SK-N-SH (cell line): ENCODE measurements at regions of chr9 and their contacts with region 1.

Region 1: GRCh38 chr9:2234371-2234893 is 219.3 kb downstream of the SMARCA2 start:
- DNase-seq: peak; percentile 64
- H3K4me3 ChIP-seq: no peak overlapping the region
- H3K27ac ChIP-seq: peak overlapping the region in 1 of 2 experiments; percentile 82; a peak in 2 of 4 replicates
- H3K4me1 ChIP-seq: peaks cover 0 to 28% of the 10 kb centered on the region in 2 experiments; a peak in 2 of 4 replicates
- H3K27me3 ChIP-seq: no peaks in the 10 kb centered on the region
- CTCF ChIP-seq: no peak
- EP300 ChIP-seq: peak in 1 of 2 experiments; percentile 85; a peak in 2 of 4 replicates
- RAD21 ChIP-seq: peak; percentile 9; the same call in 1 of the 2 replicates

Region 2: GRCh38 chr9:2153630-2154217 is 80.7 kb before region 1 on chr9:
- CTCF ChIA-PET with region 1: no interaction called
- POLR2A ChIA-PET with region 1: no interaction called
- DNase-seq: no peak
- H3K4me3 ChIP-seq: no peak overlapping the region
- H3K27ac ChIP-seq: no peak overlapping the region
- H3K4me1 ChIP-seq: peaks cover 6 to 13% of the 10 kb centered on the region in 2 experiments; a peak in 3 of 4 replicates
- H3K27me3 ChIP-seq: no peaks in the 10 kb centered on the region
- CTCF ChIP-seq: no peak
- EP300 ChIP-seq: no peak
- RAD21 ChIP-seq: no peak

Region 3: GRCh38 chr9:2181792-2182191 is 52.6 kb before region 1 on chr9:
- CTCF ChIA-PET with region 1: interaction called, 11 read pairs
- POLR2A ChIA-PET with region 1: no interaction called
- DNase-seq: peak; percentile 47
- H3K4me3 ChIP-seq: no peak overlapping the region; a peak in 1 of 4 replicates
- H3K27ac ChIP-seq: no peak overlapping the region
- H3K4me1 ChIP-seq: no peaks in the 10 kb centered on the region; a peak in 2 of 4 replicates
- H3K27me3 ChIP-seq: no peaks in the 10 kb centered on the region
- CTCF ChIP-seq: peak; percentile 61
- EP300 ChIP-seq: no peak
- RAD21 ChIP-seq: peak; percentile 60

Region 4: DNA sequence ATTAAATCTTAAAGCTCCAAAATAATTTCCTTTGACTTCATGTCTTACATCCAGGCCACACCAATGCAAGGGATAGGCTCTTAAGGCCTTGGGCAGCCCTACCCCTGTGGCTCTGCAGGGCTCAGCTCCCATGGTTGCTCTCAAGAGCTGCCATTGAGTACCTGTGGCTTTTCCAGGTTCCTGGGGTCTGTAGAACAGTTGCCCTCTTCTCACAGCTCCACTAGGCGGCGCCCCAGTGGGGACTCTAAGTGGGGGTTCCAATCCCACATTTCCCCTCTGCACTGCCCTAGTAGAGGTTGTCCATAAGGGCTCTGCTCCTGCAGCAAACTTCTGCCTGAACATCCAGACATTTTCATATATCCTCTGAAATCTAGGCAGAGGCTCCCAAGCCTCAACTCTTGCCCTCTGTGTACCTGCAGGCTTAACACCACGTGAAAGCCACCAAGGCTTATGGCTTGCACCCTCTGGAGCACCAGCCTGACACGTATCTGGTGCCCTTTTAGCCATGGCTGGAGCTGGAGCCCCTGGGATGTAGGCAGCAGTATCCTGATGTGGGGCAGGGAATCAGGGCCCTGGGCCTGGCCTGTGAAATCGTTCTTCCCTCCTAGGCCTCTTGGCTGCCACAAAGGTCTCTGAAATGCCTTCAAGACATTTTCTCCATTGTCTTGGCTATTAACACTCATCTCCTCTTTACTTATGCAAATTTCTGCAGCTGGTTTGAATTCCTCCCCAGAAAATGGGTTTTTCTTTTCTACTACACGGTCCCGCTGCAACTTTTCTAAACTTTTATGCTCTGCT is 34.2 kb before region 1 on chr9:
- CTCF ChIA-PET with region 1: no interaction called
- POLR2A ChIA-PET with region 1: no interaction called
- DNase-seq: no peak
- H3K4me3 ChIP-seq: no peak overlapping the region
- H3K27ac ChIP-seq: no peak overlapping the region
- H3K4me1 ChIP-seq: no peaks in the 10 kb centered on the region
- H3K27me3 ChIP-seq: no peaks in the 10 kb centered on the region
- CTCF ChIP-seq: no peak
- EP300 ChIP-seq: no peak
- RAD21 ChIP-seq: no peak